Sciatic nerve (tissue), 2 donors: ENCODE measurements at regions of chr5 and their contacts with region 1.

Region 1: DNA sequence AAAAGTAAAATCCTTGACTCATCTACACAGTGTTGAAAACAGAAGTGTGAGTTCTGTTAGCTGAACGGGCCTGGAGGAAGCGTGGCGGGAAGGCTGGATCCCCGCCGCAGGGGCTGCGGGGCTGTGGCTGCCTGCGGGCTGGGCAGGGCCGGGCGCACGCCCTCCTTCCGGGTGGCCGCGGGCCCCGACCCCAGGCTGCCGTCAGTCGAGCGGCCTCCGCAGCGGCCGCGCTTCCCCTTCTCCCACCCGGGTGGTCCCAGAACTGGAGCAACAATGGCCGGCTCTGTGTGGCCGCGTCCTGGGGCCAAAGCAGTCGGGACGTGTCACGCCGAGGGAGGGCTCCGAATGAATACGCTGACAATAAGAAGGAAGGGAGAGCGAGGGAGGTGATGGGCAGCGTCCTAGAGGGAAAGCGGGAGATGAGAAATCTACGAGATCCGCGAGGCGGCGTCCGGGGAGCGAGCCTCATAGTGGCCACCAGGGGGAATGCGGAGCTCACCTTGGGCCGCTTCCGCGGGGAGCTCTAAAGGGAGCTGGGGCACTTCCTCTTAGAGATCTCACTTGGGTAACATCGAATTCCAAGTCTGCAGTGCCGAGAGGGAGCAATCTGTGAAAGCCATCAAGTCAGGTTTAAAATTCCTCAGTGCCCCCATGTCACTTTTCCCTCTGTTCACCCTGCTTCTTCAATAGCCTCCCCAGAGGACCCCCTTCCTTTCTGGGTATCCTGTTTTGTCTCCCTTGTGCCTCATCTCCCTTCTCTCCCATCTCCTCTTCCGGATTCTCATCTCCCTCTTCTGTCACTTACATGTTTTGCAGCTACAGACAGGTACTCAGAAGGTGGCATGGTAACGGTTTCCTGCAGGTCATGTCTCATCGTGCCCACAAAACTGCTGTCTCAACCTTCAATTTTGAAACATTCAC is 83.9 kb downstream of the SLC1A3 start:
- DNase-seq: peak; percentile 86
- ATAC-seq: peak; percentile 75

Region 2: GRCh38 chr5:36264202-36264760 is 426.0 kb before region 1 on chr5:
- intact Hi-C with region 1: loop called (anchors 10 kb)
- DNase-seq: no peak
- ATAC-seq: no peak

Region 3: GRCh38 chr5:36414869-36415282 is 275.4 kb before region 1 on chr5:
- intact Hi-C with region 1: loop called (anchors 10 kb)
- DNase-seq: no peak
- ATAC-seq: peak; percentile 69

Region 4: DNA sequence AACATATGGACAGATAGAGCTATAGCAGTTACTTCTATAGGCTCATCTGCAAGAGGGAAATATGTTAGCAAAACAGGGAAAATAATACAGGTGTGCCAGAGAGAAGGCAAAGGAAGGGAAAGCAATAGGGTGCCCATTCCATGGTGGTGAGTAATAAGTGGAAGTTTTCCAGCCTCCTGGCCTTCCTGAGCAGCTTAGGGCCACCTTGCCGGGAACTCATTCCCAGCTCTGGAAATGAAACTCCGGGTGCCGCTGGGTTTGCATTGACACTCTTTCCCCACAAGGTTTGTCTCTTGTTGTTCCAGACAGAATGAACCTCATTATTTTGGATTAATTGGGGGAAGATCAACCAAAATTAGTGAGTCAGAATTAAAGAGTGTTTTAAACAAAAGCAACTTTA is 25.5 kb before region 1 on chr5:
- intact Hi-C with region 1: no loop called
- DNase-seq: no peak
- ATAC-seq: no peak